A549 (cell line): ENCODE measurements at regions of chr5 and their contacts with region 1.

Region 1: GRCh38 chr5:141094481-141095262 is at the start of gene PCDHB2:
- DNase-seq: peak; percentile 35 to 86
- ATAC-seq: peak; percentile 93 to 99
- H3K4me3 ChIP-seq: peak within 1 kb of the TSS; percentile 60
- H3K27ac ChIP-seq: peak within 1 kb of the TSS; percentile 70 to 82
- H3K4me1 ChIP-seq: no peaks in the 10 kb centered on the region
- CTCF ChIP-seq: peak; percentile 58
- EP300 ChIP-seq: no peak
- POLR2A ChIP-seq: no peak
- RAD21 ChIP-seq: peak; percentile 68 to 69
- polyA plus RNA-seq, gene PCDHB2: 4.1 and 5.0 TPM in 2 replicates

Region 2: DNA sequence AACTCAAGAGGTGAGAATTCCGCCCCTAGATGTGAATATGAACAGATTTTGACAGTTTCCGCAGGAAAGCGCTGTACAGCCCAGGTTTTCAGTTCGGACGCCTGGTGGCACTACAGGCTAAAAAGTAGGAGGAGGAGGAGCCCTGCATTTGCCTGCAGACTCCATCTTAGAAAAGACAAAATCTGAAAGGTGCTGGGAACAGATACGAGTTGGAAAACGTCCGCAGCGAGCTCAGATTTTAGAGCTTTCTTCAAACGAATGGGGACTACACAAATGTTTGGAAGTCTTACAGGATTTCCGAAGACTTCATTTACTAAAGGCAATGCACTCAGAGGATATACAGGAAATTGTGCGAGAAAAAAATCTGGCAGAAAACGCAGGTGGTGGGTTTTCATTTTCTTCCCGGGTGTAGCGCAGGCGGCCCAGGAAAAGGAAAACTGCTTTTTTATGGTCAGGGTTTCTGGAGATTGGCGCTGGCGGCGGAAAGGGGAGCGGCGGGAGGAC is 10.1 kb before region 1 on chr5:
- CTCF ChIA-PET with region 1: interaction called, 16 read pairs
- POLR2A ChIA-PET with region 1: interaction called, 4 read pairs
- DNase-seq: peak; percentile 59 to 79
- ATAC-seq: peak; percentile 99 to 100
- H3K4me3 ChIP-seq: peak overlapping the region; percentile 44
- H3K27ac ChIP-seq: peak overlapping the region; percentile 40 to 77
- H3K4me1 ChIP-seq: no peaks in the 10 kb centered on the region
- CTCF ChIP-seq: peak; percentile 63
- EP300 ChIP-seq: no peak
- POLR2A ChIP-seq: no peak
- RAD21 ChIP-seq: peak; percentile 71 to 75

Region 3: DNA sequence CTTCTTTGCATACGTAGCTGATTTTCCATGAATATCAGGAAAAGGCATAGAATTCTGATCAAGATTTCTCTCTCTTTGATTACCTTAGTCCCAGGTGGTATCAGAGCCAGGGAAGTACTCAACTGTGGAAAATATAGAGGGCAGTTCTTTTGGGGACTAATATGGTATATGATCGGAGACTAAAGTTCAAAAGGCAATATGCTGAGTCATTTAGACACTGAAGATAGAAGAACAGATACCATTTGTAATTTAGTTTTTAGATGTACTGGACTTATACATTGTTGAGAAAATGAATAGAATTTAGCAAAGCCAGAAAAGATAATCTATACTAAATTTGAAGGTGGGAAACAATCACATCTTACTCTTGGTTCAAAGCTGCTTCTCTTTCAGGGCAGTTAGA is 10.7 kb after region 1 on chr5:
- CTCF ChIA-PET with region 1: interaction called, 18 read pairs
- POLR2A ChIA-PET with region 1: no interaction called
- DNase-seq: no peak
- ATAC-seq: no peak
- H3K4me3 ChIP-seq: no peak overlapping the region
- H3K27ac ChIP-seq: no peak overlapping the region
- H3K4me1 ChIP-seq: no peaks in the 10 kb centered on the region
- CTCF ChIP-seq: no peak
- EP300 ChIP-seq: no peak
- POLR2A ChIP-seq: no peak
- RAD21 ChIP-seq: no peak

Region 4: DNA sequence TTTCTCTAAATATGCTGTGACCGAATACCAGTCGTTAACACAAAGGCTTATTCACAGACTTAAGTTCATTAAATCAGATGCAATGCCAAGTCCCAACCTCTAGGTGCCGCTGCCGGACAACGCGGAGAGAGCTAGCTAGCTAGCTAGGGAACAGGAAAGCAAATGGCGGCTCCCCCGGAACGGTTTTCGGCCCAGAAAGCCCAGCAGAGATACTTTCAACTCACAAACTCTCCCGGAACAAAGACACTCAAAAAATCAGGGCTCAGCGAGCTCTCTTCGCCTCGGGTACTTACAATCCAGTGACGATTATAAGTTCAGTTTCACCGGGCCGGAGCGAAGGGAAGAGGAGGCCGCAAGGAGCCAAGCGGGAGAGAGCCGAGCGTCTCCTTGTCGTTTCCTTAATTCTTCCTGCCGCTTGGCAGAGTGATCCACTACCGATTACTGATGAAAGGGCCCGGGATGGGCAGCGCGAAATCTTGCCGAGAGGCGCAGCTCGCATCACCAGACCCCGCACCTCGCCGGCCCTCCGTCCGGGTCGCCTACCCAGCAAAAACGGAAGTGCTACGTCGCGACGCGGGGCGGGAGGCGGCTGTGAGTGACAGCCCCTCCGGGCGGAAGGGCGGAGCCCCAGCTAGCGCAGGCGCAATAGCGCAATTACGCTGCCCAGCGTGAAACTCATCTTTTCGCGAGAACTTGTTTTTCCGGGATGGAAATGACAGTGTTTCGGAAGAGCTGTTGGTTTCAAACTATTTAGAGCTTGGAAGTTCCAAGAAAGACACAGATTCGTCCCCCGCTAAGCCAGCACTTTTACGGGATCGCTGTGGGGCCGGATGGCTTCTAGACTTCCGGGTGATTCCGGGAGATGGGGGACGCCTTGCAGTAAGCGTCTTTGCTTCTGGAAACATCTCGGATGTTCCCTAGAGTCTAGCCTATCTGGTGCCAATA is 225.8 kb after region 1 on chr5 and contains the start of gene TAF7:
- CTCF ChIA-PET with region 1: interaction called, 12 read pairs
- POLR2A ChIA-PET with region 1: interaction called, 4 read pairs
- DNase-seq: peak; percentile 75 to 96
- ATAC-seq: peak; percentile 97 to 98
- H3K4me3 ChIP-seq: peak within 1 kb of the TSS; percentile 68
- H3K27ac ChIP-seq: peak within 1 kb of the TSS; percentile 84 to 93
- H3K4me1 ChIP-seq: no peaks in the 10 kb centered on the region
- CTCF ChIP-seq: peak; percentile 78
- EP300 ChIP-seq: no peak
- POLR2A ChIP-seq: peak; percentile 79
- RAD21 ChIP-seq: no peak; a peak in 1 of 5 replicates
- polyA plus RNA-seq, gene TAF7: 78.1 and 90.6 TPM in 2 replicates